ENCODE measurements at regions of chr22 and their contacts with region 1.

Region 1: DNA sequence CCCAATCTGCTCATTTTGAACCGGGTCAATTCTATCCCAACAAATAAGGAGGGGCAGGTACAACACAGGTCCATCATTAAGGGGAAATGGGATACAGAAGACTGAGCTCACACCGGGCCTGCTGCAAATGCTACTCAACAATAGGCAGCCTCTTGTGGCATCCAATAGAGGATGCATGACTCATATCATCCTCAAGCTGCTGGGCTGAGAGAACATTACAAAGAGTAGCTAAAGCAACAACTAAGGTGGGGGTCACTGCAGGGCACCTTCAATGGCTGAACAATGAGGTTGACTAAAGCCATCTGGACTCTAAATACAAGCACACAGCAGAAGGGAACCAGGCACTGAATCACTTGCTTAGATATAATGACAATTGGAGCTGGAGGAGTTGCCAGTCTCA is 130.1 kb upstream of the SYN3 start:
- DNase-seq: no peak

Region 2: GRCh38 chr22:33083212-33083611 is 105.1 kb before region 1 on chr22:
- intact Hi-C with region 1: loop called (anchors 10 kb)
- DNase-seq: no peak